Common myeloid progenitor, CD34-positive (primary cell): ENCODE measurements at regions of chr2 and their contacts with region 1.

Region 1: GRCh38 chr2:233434666-233435330 is 80.5 kb downstream of the DGKD start:
- DNase-seq: no peak
- H3K4me3 ChIP-seq: no peak overlapping the region
- H3K27ac ChIP-seq: no peak overlapping the region
- H3K4me1 ChIP-seq: peaks cover 0 to 7% (median 5%) of the 10 kb centered on the region in 4 experiments
- H3K27me3 ChIP-seq: no peaks in the 10 kb centered on the region

Region 2: GRCh38 chr2:233404222-233404621 is 30.6 kb before region 1 on chr2:
- CTCF ChIA-PET with region 1: interaction called, 16 read pairs
- POLR2A ChIA-PET with region 1: interaction called, 4 read pairs
- DNase-seq: peak; percentile 58 to 74 (median 69)
- H3K4me3 ChIP-seq: no peak overlapping the region
- H3K27ac ChIP-seq: no peak overlapping the region
- H3K4me1 ChIP-seq: peaks cover 0 to 25% (median 18%) of the 10 kb centered on the region in 4 experiments
- H3K27me3 ChIP-seq: no peaks in the 10 kb centered on the region

Region 3: DNA sequence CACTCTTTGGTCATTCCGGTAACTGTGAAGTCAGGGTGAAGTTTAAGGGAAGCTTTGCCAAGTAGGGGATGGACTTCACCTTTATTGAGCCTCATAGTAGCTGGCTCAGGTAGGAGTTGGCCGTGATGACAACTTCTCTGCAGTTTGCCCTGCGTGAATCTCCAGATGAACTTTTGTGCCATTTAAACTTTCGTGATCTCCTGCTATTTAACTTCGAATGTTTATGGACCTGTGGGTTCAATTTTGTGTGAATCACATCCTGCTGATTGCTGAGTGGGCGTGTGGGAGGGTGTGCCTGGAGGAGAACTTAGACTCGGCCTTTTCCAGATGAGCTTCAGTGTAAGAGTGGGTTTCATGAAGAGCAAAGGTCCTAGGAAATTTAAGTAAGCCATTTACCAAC is 329.5 kb after region 1 on chr2:
- CTCF ChIA-PET with region 1: no interaction called
- POLR2A ChIA-PET with region 1: no interaction called
- DNase-seq: no peak
- H3K4me3 ChIP-seq: no peak overlapping the region
- H3K27ac ChIP-seq: no peak overlapping the region
- H3K4me1 ChIP-seq: no peaks in the 10 kb centered on the region
- H3K27me3 ChIP-seq: peaks cover 0 to 20% (median 6%) of the 10 kb centered on the region in 5 experiments